Right lobe of liver (tissue), 6 donors: ENCODE measurements at regions of chr12 and their contacts with region 1.

Region 1: DNA sequence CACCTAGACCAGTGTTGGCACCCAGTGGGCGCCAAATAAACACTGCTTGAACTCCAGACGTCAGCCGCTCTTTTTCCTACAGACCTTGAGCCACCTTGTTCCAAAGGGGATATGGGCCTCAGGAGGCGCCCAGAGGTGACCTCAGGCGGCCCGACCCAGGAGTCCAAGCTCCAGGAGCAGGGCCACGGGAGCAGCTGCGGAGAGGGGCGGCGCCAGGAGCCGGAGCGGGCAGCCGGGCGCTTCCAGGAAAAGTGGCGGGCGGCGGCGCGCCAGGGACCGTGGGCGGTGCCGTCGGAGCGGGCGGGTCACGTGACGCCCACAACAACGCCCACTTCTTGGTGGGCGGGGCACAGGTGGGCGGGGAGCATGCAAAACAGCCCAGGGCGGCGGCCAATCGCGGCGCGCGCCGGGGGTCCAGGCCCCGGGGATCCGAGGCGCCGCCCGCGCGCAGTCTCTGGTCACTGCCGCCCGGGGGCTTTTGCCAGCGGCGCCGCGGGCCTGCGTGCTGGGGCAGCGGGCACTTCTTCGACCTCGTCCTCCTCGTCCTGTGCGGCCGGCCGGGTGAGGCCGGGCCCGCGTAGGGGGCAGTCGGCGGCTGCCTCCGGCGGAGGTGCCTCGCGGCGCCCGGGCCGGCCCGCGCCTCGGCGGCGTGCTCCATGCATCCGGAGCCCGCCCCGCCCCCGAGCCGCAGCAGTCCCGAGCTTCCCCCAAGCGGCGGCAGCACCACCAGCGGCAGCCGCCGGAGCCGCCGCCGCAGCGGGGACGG is at the start of gene ORAI1:
- DNase-seq: peak; percentile 98 to 99 (median 99)
- ATAC-seq: peak; percentile 80 to 94 (median 88)
- H3K4me3 ChIP-seq: peak within 1 kb of the TSS; percentile 75 to 82 (median 81)
- H3K27ac ChIP-seq: peak within 1 kb of the TSS; percentile 85 to 95 (median 94)
- H3K4me1 ChIP-seq: peaks cover 0 to 19% (median 9%) of the 10 kb centered on the region in 4 donors
- H3K27me3 ChIP-seq: no peaks in the 10 kb centered on the region
- CTCF ChIP-seq: peak in 2 of 4 donors; percentile 25 to 33
- POLR2A ChIP-seq: peak; percentile 94
- total RNA-seq, gene ORAI1: 6.9 to 14.4 (median 9.0) TPM

Region 2: DNA sequence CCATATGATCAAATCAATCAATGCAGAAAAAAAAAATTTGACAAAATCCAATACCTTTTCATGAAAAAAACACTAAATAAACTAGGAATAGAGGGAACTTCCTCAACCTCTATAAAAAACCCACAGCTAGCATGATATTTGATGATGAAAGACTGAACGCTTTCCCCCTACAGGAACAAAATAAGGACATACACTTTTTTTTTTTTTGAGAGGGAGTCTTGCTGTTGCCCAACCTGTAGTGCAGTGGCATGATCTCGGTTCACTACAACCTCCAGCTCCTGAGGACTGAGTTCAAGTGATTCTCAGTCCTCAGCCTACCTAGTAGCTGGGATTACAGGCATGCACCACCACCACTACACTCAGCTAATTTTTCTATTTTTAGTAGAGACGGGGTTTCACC is 311.8 kb before region 1 on chr12:
- intact Hi-C with region 1: no loop called
- DNase-seq: peak in 1 of 3 donors; percentile 28
- ATAC-seq: peak in 1 of 4 donors; percentile 40
- H3K4me3 ChIP-seq: no peak overlapping the region
- H3K27ac ChIP-seq: no peak overlapping the region
- H3K4me1 ChIP-seq: no peaks in the 10 kb centered on the region
- H3K27me3 ChIP-seq: no peaks in the 10 kb centered on the region
- CTCF ChIP-seq: no peak
- POLR2A ChIP-seq: no peak

Region 3: DNA sequence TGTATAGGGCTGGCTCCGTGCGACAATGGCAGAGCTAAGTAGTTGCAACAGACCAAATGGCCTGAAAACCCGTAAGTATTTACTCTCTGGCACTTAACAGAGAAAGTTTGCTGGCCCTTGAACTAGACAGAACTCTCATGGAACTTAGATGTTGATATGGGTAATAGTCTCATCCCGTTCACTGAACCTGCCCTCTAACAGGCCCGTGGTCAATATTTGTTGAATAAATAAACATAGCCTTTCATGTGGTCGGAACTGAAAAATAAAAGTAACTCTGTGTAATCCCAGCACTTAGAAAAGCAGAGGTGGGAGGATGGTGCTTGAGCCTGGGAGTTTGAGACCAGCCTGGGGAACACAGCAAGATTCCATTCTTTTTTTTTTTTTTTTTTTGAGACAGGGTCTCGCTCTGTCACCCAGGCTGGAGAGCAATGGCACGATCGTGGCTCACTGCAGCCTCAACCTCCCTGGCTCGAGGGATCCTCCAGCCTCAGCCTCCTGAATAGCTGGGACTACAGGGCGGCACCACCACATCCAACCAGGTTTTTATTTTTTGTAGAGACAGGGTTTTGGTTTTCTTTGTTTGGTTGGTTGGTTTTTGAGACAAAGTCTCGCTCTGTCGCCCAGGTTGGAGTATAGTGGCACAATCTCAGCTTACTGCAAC is 75.2 kb before region 1 on chr12:
- intact Hi-C with region 1: loop called in 1 of 2 experiments (anchors 10 kb)
- DNase-seq: peak in 1 of 3 donors; percentile 71
- ATAC-seq: peak; percentile 82 to 91 (median 85)
- H3K4me3 ChIP-seq: no peak overlapping the region
- H3K27ac ChIP-seq: peak overlapping the region in 2 of 3 donors; percentile 64 to 69
- H3K4me1 ChIP-seq: peaks cover 0 to 20% (median 8%) of the 10 kb centered on the region in 4 donors
- H3K27me3 ChIP-seq: no peaks in the 10 kb centered on the region
- CTCF ChIP-seq: no peak
- POLR2A ChIP-seq: no peak